Mammary epithelial cell (primary cell): ENCODE measurements at regions of chr14 and their contacts with region 1.

Region 1: GRCh38 chr14:75132382-75133086 is 5.7 kb upstream of the NEK9 start:
- DNase-seq: peak; percentile 71
- H3K4me3 ChIP-seq: no peak overlapping the region
- H3K27ac ChIP-seq: peak overlapping the region; percentile 20
- H3K4me1 ChIP-seq: peaks cover 16% of the 10 kb centered on the region
- H3K27me3 ChIP-seq: no peaks in the 10 kb centered on the region
- CTCF ChIP-seq: peak; percentile 69 to 71

Region 2: DNA sequence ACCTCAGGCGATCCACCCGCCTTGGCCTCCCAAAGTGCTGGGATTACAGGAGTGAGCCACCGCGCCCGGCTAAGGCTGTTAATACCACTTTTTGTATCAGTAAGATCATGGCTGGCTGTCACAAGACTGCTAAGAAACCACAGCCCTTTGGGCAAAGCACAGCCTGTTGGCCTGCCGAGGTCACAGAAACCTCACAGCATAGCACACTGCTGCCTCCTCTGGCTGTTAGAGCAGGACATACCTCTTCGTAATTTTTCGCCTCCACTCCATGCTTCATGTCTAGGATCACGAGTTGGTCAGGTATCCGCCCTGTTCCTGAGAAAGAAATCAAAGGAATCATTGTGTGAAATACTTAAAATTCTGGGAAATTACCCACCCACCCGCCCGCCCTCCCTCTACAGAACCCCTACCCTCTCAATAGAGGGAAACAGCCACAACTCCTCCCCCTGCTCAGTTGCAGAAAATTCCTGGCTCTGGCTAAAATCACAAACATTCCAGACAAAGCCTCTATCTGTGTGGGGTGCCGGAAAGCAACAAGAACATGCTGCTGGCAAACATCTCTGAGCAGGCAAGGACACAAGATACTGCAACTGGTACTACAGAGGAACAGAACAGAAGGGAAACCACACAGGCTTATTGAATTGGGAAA is 15.0 kb after region 1 on chr14:
- CTCF ChIA-PET with region 1: no interaction called
- dilution Hi-C with region 1: no loop called
- in situ Hi-C with region 1: no loop called
- intact Hi-C with region 1: loop called (anchors 1 kb)
- DNase-seq: peak; percentile 95
- H3K4me3 ChIP-seq: no peak overlapping the region
- H3K27ac ChIP-seq: peak overlapping the region; percentile 75
- H3K4me1 ChIP-seq: peaks cover 23% of the 10 kb centered on the region
- H3K27me3 ChIP-seq: no peaks in the 10 kb centered on the region
- CTCF ChIP-seq: peak; percentile 64 to 72

Region 3: DNA sequence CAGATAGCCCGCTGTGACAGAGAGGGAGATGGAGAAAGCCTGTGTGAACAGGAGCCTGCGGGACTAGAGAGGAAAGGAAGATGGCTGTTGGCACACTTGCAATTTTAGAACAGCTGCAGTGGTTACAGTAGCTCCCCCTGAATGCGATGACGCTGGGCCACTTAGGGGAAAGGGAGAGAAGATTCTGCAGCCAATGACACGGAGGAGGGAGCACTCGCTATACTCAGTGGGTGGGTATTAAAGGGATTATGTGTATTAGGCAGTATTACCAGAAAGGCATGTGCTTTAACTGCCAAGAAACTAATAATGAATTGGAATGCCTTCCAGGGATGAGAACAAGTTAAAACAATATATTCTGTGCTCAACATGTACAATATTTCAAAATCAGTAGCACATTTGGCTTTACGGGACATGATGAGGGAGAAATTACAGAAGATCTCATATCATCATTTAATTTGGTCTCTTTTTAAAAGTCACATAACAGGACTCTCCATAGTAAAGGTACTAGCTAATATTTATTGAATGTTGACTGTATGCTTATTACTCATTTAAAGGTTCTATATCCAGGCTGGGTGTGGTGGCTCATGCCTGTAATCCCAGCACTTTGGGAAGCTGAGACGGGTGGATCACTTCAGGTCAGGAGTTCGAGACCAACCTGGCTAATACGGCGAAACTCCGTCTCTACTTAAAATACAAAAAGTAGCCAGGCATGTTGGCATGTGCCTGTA is 110.2 kb after region 1 on chr14:
- CTCF ChIA-PET with region 1: no interaction called
- dilution Hi-C with region 1: no loop called
- in situ Hi-C with region 1: no loop called
- intact Hi-C with region 1: loop called (anchors 5 kb)
- DNase-seq: peak; percentile 84
- H3K4me3 ChIP-seq: no peak overlapping the region
- H3K27ac ChIP-seq: peak overlapping the region; percentile 73
- H3K4me1 ChIP-seq: peaks cover 10% of the 10 kb centered on the region
- H3K27me3 ChIP-seq: no peaks in the 10 kb centered on the region
- CTCF ChIP-seq: no peak

Region 4: DNA sequence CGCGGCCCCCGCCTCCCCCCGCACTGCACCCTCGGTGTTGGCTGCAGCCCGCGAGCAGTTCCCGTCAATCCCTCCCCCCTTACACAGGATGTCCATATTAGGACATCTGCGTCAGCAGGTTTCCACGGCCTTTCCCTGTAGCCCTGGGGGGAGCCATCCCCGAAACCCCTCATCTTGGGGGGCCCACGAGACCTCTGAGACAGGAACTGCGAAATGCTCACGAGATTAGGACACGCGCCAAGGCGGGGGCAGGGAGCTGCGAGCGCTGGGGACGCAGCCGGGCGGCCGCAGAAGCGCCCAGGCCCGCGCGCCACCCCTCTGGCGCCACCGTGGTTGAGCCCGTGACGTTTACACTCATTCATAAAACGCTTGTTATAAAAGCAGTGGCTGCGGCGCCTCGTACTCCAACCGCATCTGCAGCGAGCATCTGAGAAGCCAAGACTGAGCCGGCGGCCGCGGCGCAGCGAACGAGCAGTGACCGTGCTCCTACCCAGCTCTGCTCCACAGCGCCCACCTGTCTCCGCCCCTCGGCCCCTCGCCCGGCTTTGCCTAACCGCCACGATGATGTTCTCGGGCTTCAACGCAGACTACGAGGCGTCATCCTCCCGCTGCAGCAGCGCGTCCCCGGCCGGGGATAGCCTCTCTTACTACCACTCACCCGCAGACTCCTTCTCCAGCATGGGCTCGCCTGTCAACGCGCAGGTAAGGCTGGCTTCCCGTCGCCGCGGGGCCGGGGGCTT is 146.1 kb after region 1 on chr14 and contains the start of gene FOS:
- CTCF ChIA-PET with region 1: no interaction called
- dilution Hi-C with region 1: no loop called
- in situ Hi-C with region 1: no loop called
- intact Hi-C with region 1: loop called (anchors 1 kb)
- DNase-seq: peak; percentile 91
- H3K4me3 ChIP-seq: peak within 1 kb of the TSS; percentile 66 to 96 (median 81)
- H3K27ac ChIP-seq: peak within 1 kb of the TSS; percentile 97
- H3K4me1 ChIP-seq: peaks cover 31% of the 10 kb centered on the region
- H3K27me3 ChIP-seq: no peaks in the 10 kb centered on the region
- CTCF ChIP-seq: no peak
- total RNA-seq, gene FOS: 78.5 to 204 TPM

Region 5: GRCh38 chr14:75487155-75487671 is 354.7 kb after region 1 on chr14:
- CTCF ChIA-PET with region 1: no interaction called
- dilution Hi-C with region 1: no loop called
- in situ Hi-C with region 1: loop called (anchors 10 kb)
- intact Hi-C with region 1: loop called (anchors 2 kb)
- DNase-seq: peak; percentile 76
- H3K4me3 ChIP-seq: no peak overlapping the region
- H3K27ac ChIP-seq: no peak overlapping the region
- H3K4me1 ChIP-seq: peaks cover 8% of the 10 kb centered on the region
- H3K27me3 ChIP-seq: no peaks in the 10 kb centered on the region
- CTCF ChIP-seq: no peak